CD4-positive, alpha-beta memory T cell (primary cell): ENCODE measurements at regions of chr19 and their contacts with region 1.

Region 1: GRCh38 chr19:19404879-19405860 is at the start of gene GATAD2A:
- DNase-seq: peak; percentile 86 to 94 (median 90)
- H3K4me3 ChIP-seq: peak within 1 kb of the TSS; percentile 21 to 78
- H3K4me3 Mint-ChIP-seq: peak within 1 kb of the TSS; percentile 86 to 97 (median 95)
- H3K27ac ChIP-seq: peak within 1 kb of the TSS; percentile 71
- H3K27ac Mint-ChIP-seq: peak within 1 kb of the TSS; percentile 92 to 96 (median 95)
- H3K4me1 ChIP-seq: peaks cover 53% of the 10 kb centered on the region
- H3K4me1 Mint-ChIP-seq: peaks cover 36 to 72% (median 55%) of the 10 kb centered on the region in 4 donors
- H3K27me3 ChIP-seq: no peaks in the 10 kb centered on the region
- H3K27me3 Mint-ChIP-seq: no peaks in the 10 kb centered on the region
- total RNA-seq, gene GATAD2A: 101 to 108 TPM

Region 2: GRCh38 chr19:19192078-19192882 is 212.9 kb before region 1 on chr19 and contains the starts of genes BORCS8 and RFXANK:
- CTCF ChIA-PET with region 1: no interaction called
- POLR2A ChIA-PET with region 1: interaction called, 5 read pairs
- intact Hi-C with region 1: loop called (anchors 5 kb)
- DNase-seq: peak; percentile 97 to 99 (median 99)
- H3K4me3 ChIP-seq: peak within 1 kb of the TSS; percentile 98 to 100
- H3K4me3 Mint-ChIP-seq: peak within 1 kb of the TSS; percentile 95 to 99 (median 98)
- H3K27ac ChIP-seq: peak within 1 kb of the TSS; percentile 100
- H3K27ac Mint-ChIP-seq: peak within 1 kb of the TSS; percentile 98 to 100 (median 99)
- H3K4me1 ChIP-seq: peaks cover 44% of the 10 kb centered on the region
- H3K4me1 Mint-ChIP-seq: peaks cover 18 to 55% (median 37%) of the 10 kb centered on the region in 4 donors
- H3K27me3 ChIP-seq: no peaks in the 10 kb centered on the region
- H3K27me3 Mint-ChIP-seq: no peaks in the 10 kb centered on the region
- total RNA-seq, gene BORCS8: 36.0 to 41.2 TPM
- total RNA-seq, gene RFXANK: 69.5 to 77.2 TPM

Region 3: DNA sequence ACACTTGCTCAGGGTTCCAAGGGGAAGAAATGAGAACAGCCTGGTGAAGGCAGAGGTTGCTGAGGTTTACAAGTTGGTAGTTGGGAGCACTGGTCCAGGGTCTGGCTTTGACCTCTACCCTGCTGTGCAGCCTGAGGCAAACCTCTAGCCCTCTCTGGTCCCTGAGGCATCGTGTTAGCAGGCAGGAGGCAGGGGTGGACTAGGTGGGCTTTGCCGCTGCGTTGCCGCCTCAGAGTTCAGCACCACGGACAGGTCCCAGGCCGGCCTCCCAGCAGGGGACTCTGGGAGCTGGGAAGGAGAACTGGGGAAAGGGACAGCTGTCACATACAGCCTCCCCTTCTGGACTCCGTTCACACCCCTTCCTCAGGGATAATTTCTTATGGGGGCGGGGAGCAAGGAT is 190.3 kb before region 1 on chr19:
- CTCF ChIA-PET with region 1: no interaction called
- POLR2A ChIA-PET with region 1: no interaction called
- intact Hi-C with region 1: no loop called
- DNase-seq: peak in 1 of 5 donors; percentile 21
- H3K4me3 ChIP-seq: no peak overlapping the region
- H3K4me3 Mint-ChIP-seq: no peak overlapping the region
- H3K27ac ChIP-seq: no peak overlapping the region
- H3K27ac Mint-ChIP-seq: no peak overlapping the region
- H3K4me1 ChIP-seq: no peaks in the 10 kb centered on the region
- H3K4me1 Mint-ChIP-seq: peaks cover 0 to 8% (median 3%) of the 10 kb centered on the region in 4 donors
- H3K27me3 ChIP-seq: peaks cover 30% of the 10 kb centered on the region
- H3K27me3 Mint-ChIP-seq: peaks cover 35 to 41% of the 10 kb centered on the region in 2 donors

Region 4: GRCh38 chr19:19297759-19298158 is 107.4 kb before region 1 on chr19:
- CTCF ChIA-PET with region 1: no interaction called
- POLR2A ChIA-PET with region 1: no interaction called
- intact Hi-C with region 1: no loop called
- DNase-seq: no peak
- H3K4me3 ChIP-seq: no peak overlapping the region
- H3K4me3 Mint-ChIP-seq: no peak overlapping the region
- H3K27ac ChIP-seq: no peak overlapping the region
- H3K27ac Mint-ChIP-seq: peak overlapping the region in 1 of 7 donors; percentile 70
- H3K4me1 ChIP-seq: no peaks in the 10 kb centered on the region
- H3K4me1 Mint-ChIP-seq: peaks cover 0 to 2% (median 0%) of the 10 kb centered on the region in 4 donors
- H3K27me3 ChIP-seq: no peaks in the 10 kb centered on the region
- H3K27me3 Mint-ChIP-seq: no peaks in the 10 kb centered on the region

Region 5: GRCh38 chr19:19366612-19367396 is 38.4 kb before region 1 on chr19:
- CTCF ChIA-PET with region 1: interaction called, 62 read pairs
- POLR2A ChIA-PET with region 1: interaction called, 33 read pairs
- intact Hi-C with region 1: loop called (anchors 1 kb)
- DNase-seq: peak; percentile 63 to 73 (median 70)
- H3K4me3 ChIP-seq: peak overlapping the region in 1 of 2 donors; percentile 11
- H3K4me3 Mint-ChIP-seq: peak overlapping the region in 6 of 8 donors; percentile 31 to 82 (median 64)
- H3K27ac ChIP-seq: no peak overlapping the region
- H3K27ac Mint-ChIP-seq: peak overlapping the region; percentile 74 to 93 (median 89)
- H3K4me1 ChIP-seq: peaks cover 24% of the 10 kb centered on the region
- H3K4me1 Mint-ChIP-seq: peaks cover 12 to 25% (median 18%) of the 10 kb centered on the region in 4 donors
- H3K27me3 ChIP-seq: no peaks in the 10 kb centered on the region
- H3K27me3 Mint-ChIP-seq: no peaks in the 10 kb centered on the region

Region 6: GRCh38 chr19:19385108-19385899 is 19.9 kb before region 1 on chr19:
- CTCF ChIA-PET with region 1: interaction called, 5 read pairs
- POLR2A ChIA-PET with region 1: interaction called, 49 read pairs
- intact Hi-C with region 1: loop called (anchors 1 kb)
- DNase-seq: peak; percentile 99 to 100 (median 99)
- H3K4me3 ChIP-seq: peak overlapping the region; percentile 52 to 57
- H3K4me3 Mint-ChIP-seq: peak overlapping the region; percentile 87 to 97 (median 94)
- H3K27ac ChIP-seq: peak overlapping the region; percentile 85
- H3K27ac Mint-ChIP-seq: peak overlapping the region; percentile 90 to 97 (median 94)
- H3K4me1 ChIP-seq: peaks cover 48% of the 10 kb centered on the region
- H3K4me1 Mint-ChIP-seq: peaks cover 25 to 47% (median 35%) of the 10 kb centered on the region in 4 donors
- H3K27me3 ChIP-seq: no peaks in the 10 kb centered on the region
- H3K27me3 Mint-ChIP-seq: no peaks in the 10 kb centered on the region

Region 7: GRCh38 chr19:19459707-19460251 is 54.6 kb after region 1 on chr19:
- CTCF ChIA-PET with region 1: interaction called, 15 read pairs
- POLR2A ChIA-PET with region 1: interaction called, 42 read pairs
- intact Hi-C with region 1: loop called (anchors 1 kb)
- DNase-seq: peak; percentile 63 to 89 (median 67)
- H3K4me3 ChIP-seq: peak overlapping the region; percentile 54 to 87
- H3K4me3 Mint-ChIP-seq: peak overlapping the region; percentile 86 to 95 (median 90)
- H3K27ac ChIP-seq: peak overlapping the region; percentile 79
- H3K27ac Mint-ChIP-seq: peak overlapping the region; percentile 96 to 100 (median 99)
- H3K4me1 ChIP-seq: peaks cover 88% of the 10 kb centered on the region
- H3K4me1 Mint-ChIP-seq: peaks cover 55 to 91% (median 75%) of the 10 kb centered on the region in 4 donors
- H3K27me3 ChIP-seq: no peaks in the 10 kb centered on the region
- H3K27me3 Mint-ChIP-seq: no peaks in the 10 kb centered on the region